Dendritic cell treated with granulocyte-macrophage colony-stimulating factor and Interleukin-4, amounts not matched to agents 40 ng/mL and 50 ng/mL, for 4 days (primary cell): ENCODE measurements at regions of chr11 and their contacts with region 1.

Region 1: GRCh38 chr11:60118338-60118737 is 29.9 kb downstream of the MS4A2 start:
- H3K4me3 Mint-ChIP-seq: no peak overlapping the region
- H3K27ac Mint-ChIP-seq: no peak overlapping the region
- H3K4me1 Mint-ChIP-seq: peaks cover 19% of the 10 kb centered on the region
- H3K27me3 Mint-ChIP-seq: no peaks in the 10 kb centered on the region

Region 2: DNA sequence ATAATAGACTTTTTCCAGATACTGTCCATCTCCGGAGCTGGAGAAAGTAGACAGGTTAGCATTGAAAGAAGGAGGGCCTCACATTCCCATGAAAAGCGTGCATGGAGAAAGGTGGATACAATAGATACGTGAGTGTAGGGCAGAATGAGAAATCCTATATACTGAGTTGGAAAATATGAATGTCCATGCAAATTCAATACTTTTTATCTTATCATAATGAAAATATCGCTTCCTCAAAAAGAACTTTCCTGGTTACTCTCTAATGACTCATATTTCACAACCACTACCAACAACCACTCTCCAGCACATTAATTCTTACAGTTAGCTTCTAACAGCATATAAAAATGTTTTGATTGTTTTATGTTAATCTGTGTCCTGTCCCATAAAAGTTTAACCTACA is 86.6 kb after region 1 on chr11:
- intact Hi-C with region 1: loop called (anchors 5 kb)
- H3K4me3 Mint-ChIP-seq: no peak overlapping the region
- H3K27ac Mint-ChIP-seq: peak overlapping the region; percentile 64
- H3K4me1 Mint-ChIP-seq: peaks cover 37% of the 10 kb centered on the region
- H3K27me3 Mint-ChIP-seq: no peaks in the 10 kb centered on the region